A549 (cell line): ENCODE measurements at regions of chr15 and their contacts with region 1.

Region 1: DNA sequence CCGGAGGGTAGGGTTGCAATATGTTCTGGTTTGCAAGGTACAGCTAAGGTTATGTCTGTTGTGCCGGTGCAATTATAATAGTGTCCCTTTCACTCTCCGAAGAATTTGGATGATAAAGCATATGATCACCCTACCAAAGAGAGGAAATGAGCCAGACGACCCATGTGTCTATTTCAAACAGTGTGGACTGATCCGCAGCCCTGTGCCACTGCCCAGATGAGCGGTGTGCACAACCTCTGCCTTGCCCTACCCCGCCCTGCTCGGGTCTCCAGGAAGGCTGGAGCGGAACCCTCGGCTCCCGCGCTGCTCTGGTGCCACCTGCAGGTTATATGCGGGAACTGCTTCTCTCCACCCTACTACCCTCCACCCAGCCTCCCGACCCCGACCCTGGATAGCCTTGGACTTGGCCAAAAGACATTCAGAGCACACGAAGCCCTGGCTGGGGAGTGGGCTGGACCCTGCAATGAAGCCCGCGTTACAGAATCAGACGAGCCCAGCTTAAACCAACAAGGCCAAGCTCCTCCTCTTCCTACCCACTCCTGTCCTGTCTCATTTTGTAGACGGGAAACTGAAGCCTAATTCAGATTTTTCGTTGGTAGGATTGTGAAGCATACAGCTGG is 68.4 kb upstream of the CHRNB4 start:
- DNase-seq: peak; percentile 67 to 86
- ATAC-seq: peak; percentile 98 to 99
- H3K4me3 ChIP-seq: peak overlapping the region; percentile 30
- H3K27ac ChIP-seq: peak overlapping the region; percentile 46 to 54; a peak in 4 of 6 replicates
- H3K4me1 ChIP-seq: peaks cover 4% of the 10 kb centered on the region; the same call in 1 of the 3 replicates
- CTCF ChIP-seq: peak; percentile 97
- EP300 ChIP-seq: no peak
- POLR2A ChIP-seq: no peak
- RAD21 ChIP-seq: peak; percentile 96 to 98

Region 2: GRCh38 chr15:78308422-78309032 is 400.8 kb before region 1 on chr15:
- CTCF ChIA-PET with region 1: interaction called, 29 read pairs
- POLR2A ChIA-PET with region 1: no interaction called
- DNase-seq: peak; percentile 77 to 87
- ATAC-seq: peak; percentile 85 to 95
- H3K4me3 ChIP-seq: no peak overlapping the region
- H3K27ac ChIP-seq: 0 out of 6 replicates have a peak overlapping the region, but pooled peaks of 1 of the 2 experiments have one; percentile 17
- H3K4me1 ChIP-seq: peaks cover 5% of the 10 kb centered on the region; the same call in 2 of the 3 replicates
- CTCF ChIP-seq: peak; percentile 98
- EP300 ChIP-seq: no peak
- POLR2A ChIP-seq: no peak
- RAD21 ChIP-seq: peak; percentile 98

Region 3: GRCh38 chr15:78618490-78618934 is 90.9 kb before region 1 on chr15:
- CTCF ChIA-PET with region 1: interaction called, 256 read pairs
- POLR2A ChIA-PET with region 1: no interaction called
- DNase-seq: peak; percentile 89 to 96
- ATAC-seq: peak; percentile 77 to 78
- H3K4me3 ChIP-seq: no peak overlapping the region
- H3K27ac ChIP-seq: no peak overlapping the region
- H3K4me1 ChIP-seq: peaks cover 14% of the 10 kb centered on the region; the same call in 2 of the 3 replicates
- CTCF ChIP-seq: peak; percentile 97
- EP300 ChIP-seq: no peak
- POLR2A ChIP-seq: no peak
- RAD21 ChIP-seq: peak; percentile 92 to 96

Region 4: GRCh38 chr15:78654272-78654671 is 55.1 kb before region 1 on chr15:
- CTCF ChIA-PET with region 1: interaction called, 23 read pairs
- POLR2A ChIA-PET with region 1: no interaction called
- DNase-seq: no peak
- ATAC-seq: peak; percentile 44 to 54; a peak in 3 of 6 replicates
- H3K4me3 ChIP-seq: no peak overlapping the region
- H3K27ac ChIP-seq: no peak overlapping the region
- H3K4me1 ChIP-seq: no peaks in the 10 kb centered on the region
- CTCF ChIP-seq: no peak
- EP300 ChIP-seq: no peak
- POLR2A ChIP-seq: no peak
- RAD21 ChIP-seq: no peak

Region 5: DNA sequence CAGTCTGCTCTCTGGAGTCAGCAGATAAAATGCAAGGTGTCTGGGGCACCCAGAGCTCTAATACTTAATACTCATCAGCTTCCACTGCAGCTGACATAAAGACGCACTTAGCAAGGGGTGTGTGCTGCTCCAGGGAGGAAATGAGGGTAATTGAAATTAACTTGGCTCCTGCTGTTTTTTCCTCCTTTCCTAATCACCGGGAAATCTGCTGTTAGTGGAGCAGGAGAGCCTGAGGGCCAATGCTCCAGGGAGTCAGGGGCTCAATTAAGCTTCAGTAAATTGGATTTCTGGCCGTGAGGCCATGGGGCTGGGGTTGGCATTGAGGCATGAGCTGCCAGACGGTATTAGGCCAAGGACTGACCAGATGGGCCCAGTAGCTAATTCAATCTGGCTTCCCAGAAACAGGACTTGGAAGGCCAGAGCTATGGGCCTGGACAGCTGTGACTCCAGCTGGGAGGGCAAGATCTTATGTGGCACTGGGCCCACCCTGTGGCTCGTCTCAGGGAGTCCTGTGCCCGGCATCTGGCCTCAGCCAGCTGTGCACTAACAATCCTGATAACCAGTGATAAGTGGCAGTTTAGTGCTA is 37.7 kb before region 1 on chr15:
- CTCF ChIA-PET with region 1: interaction called, 15 read pairs
- POLR2A ChIA-PET with region 1: no interaction called
- DNase-seq: no peak
- ATAC-seq: no peak
- H3K4me3 ChIP-seq: no peak overlapping the region
- H3K27ac ChIP-seq: peak overlapping the region in 1 of 2 experiments; percentile 61; a peak in 3 of 6 replicates
- H3K4me1 ChIP-seq: peaks cover 6% of the 10 kb centered on the region; the same call in 1 of the 3 replicates
- CTCF ChIP-seq: no peak
- EP300 ChIP-seq: no peak
- POLR2A ChIP-seq: no peak
- RAD21 ChIP-seq: no peak

Region 6: GRCh38 chr15:78695854-78696253 is 13.5 kb before region 1 on chr15:
- CTCF ChIA-PET with region 1: interaction called, 87 read pairs
- POLR2A ChIA-PET with region 1: no interaction called
- DNase-seq: no peak
- ATAC-seq: no peak; a peak in 1 of 6 replicates
- H3K4me3 ChIP-seq: no peak overlapping the region
- H3K27ac ChIP-seq: no peak overlapping the region
- H3K4me1 ChIP-seq: no peaks in the 10 kb centered on the region
- CTCF ChIP-seq: no peak
- EP300 ChIP-seq: no peak
- POLR2A ChIP-seq: no peak
- RAD21 ChIP-seq: no peak

Region 7: GRCh38 chr15:78739996-78740903 is 30.9 kb after region 1 on chr15:
- CTCF ChIA-PET with region 1: interaction called, 43 read pairs
- POLR2A ChIA-PET with region 1: no interaction called
- DNase-seq: peak in 1 of 2 experiments; percentile 88
- ATAC-seq: peak; percentile 84 to 97
- H3K4me3 ChIP-seq: no peak overlapping the region
- H3K27ac ChIP-seq: peak overlapping the region; percentile 65 to 80
- H3K4me1 ChIP-seq: peaks cover 4% of the 10 kb centered on the region
- CTCF ChIP-seq: peak; percentile 69
- EP300 ChIP-seq: no peak
- POLR2A ChIP-seq: no peak
- RAD21 ChIP-seq: peak; percentile 60 to 67

Region 8: DNA sequence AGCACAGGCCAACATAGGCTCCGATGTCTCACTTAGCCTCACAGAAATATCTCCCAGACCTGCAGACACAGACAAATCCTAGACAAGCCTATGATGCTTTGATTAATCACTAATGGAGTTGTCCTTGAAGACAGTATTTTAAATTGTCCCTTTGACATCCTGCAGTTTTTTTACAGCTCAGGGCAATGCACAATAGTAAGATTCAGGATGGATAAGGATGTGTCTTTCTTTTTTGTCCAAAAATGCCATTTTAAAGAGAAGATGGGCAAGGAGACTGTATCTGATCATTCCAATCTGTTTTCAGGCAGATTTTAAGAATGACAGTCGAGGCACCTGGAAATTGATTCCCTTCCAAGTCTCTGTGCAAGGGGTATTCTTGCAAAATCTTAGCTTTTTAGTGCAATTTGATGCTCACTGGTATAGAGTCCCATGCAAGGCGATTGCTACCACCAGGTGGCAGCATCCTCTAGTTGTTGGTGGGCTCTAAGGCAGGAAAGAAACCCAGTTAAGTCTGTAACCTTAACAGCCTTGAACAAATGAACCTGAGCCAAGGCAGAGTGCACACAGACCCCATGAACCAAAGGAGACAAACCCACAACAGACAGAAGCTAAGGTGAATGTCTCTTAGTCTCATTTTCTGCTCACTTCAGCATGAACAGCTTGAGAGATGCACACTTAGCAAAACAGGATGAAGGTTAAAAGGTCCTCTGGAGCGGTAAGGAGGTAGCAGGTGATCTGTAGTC is 671.6 kb after region 1 on chr15:
- CTCF ChIA-PET with region 1: no interaction called
- POLR2A ChIA-PET with region 1: no interaction called
- DNase-seq: peak; percentile 70 to 79
- ATAC-seq: peak; percentile 97 to 100
- H3K4me3 ChIP-seq: no peak overlapping the region
- H3K27ac ChIP-seq: no peak overlapping the region
- H3K4me1 ChIP-seq: no peaks in the 10 kb centered on the region
- CTCF ChIP-seq: peak; percentile 98
- EP300 ChIP-seq: no peak
- POLR2A ChIP-seq: no peak
- RAD21 ChIP-seq: peak; percentile 96